ENCODE measurements at regions of chr5 and their contacts with region 1.

Region 1: DNA sequence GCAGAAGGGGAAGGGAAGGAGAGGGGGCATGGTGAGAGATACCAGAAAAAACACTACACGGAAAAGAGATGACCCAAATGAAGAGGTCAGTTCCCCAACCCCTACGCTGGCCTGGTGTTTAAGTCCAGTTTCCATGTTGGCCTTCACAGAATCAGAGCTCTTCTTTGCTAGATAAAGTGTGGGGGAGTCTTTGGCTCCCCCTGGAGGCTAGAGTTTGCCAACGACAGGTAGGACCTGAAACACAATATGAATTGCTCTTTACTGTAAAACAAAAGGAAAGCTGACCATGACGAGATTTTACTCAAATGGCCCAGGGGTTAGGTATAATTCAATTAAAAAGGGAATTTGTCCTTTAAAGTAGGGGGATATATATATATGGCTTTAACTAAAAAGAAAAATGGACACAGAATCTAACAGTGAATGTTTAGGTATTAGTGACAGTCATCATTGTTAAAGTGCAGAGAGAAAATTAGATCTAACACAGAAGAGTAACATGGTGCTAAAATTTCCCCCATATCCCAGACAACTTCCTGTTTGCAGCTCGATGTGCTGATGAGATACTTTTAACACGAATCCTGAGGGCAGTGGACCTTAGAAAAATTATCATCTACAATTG is 92.0 kb downstream of the SV2C start:
- DNase-seq: peak; percentile 70
- H3K4me3 Mint-ChIP-seq: no peak overlapping the region
- H3K27ac Mint-ChIP-seq: no peak overlapping the region
- H3K4me1 Mint-ChIP-seq: peaks cover 34% of the 10 kb centered on the region
- H3K27me3 Mint-ChIP-seq: no peaks in the 10 kb centered on the region

Region 2: GRCh38 chr5:76074487-76075065 is 100.6 kb before region 1 on chr5:
- CTCF ChIA-PET with region 1: interaction called, 27 read pairs
- POLR2A ChIA-PET with region 1: no interaction called
- intact Hi-C with region 1: loop called (anchors 1 kb)
- DNase-seq: peak; percentile 54
- H3K4me3 Mint-ChIP-seq: no peak overlapping the region
- H3K27ac Mint-ChIP-seq: no peak overlapping the region
- H3K4me1 Mint-ChIP-seq: no peaks in the 10 kb centered on the region
- H3K27me3 Mint-ChIP-seq: peaks cover 46% of the 10 kb centered on the region

Region 3: DNA sequence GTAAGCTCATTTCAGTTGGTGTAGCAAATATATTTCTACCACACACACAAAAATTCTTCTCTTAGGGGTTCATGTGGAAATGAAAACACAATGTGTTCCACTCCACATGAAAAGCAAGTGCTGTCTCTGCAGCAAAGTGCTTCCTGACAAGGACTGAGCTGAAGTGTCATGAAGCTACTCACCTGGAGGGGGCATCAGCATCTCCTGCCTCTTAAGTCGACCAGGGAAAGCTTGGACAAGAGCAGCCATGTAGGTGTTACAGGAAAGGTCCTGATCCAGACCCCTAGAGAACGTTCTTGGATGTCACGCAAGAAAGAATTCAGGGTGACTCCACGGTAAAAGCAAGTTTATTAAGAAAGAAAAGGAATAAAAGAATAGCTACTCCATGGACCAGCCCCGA is 29.2 kb before region 1 on chr5:
- CTCF ChIA-PET with region 1: interaction called, 32 read pairs
- POLR2A ChIA-PET with region 1: no interaction called
- intact Hi-C with region 1: no loop called
- DNase-seq: peak; percentile 27
- H3K4me3 Mint-ChIP-seq: no peak overlapping the region
- H3K27ac Mint-ChIP-seq: no peak overlapping the region
- H3K4me1 Mint-ChIP-seq: no peaks in the 10 kb centered on the region
- H3K27me3 Mint-ChIP-seq: peaks cover 2% of the 10 kb centered on the region

Region 4: GRCh38 chr5:76154009-76154690 is 21.0 kb before region 1 on chr5:
- CTCF ChIA-PET with region 1: interaction called, 18 read pairs
- POLR2A ChIA-PET with region 1: no interaction called
- intact Hi-C with region 1: no loop called
- DNase-seq: no peak
- H3K4me3 Mint-ChIP-seq: no peak overlapping the region
- H3K27ac Mint-ChIP-seq: no peak overlapping the region
- H3K4me1 Mint-ChIP-seq: no peaks in the 10 kb centered on the region
- H3K27me3 Mint-ChIP-seq: peaks cover 12% of the 10 kb centered on the region

Region 5: DNA sequence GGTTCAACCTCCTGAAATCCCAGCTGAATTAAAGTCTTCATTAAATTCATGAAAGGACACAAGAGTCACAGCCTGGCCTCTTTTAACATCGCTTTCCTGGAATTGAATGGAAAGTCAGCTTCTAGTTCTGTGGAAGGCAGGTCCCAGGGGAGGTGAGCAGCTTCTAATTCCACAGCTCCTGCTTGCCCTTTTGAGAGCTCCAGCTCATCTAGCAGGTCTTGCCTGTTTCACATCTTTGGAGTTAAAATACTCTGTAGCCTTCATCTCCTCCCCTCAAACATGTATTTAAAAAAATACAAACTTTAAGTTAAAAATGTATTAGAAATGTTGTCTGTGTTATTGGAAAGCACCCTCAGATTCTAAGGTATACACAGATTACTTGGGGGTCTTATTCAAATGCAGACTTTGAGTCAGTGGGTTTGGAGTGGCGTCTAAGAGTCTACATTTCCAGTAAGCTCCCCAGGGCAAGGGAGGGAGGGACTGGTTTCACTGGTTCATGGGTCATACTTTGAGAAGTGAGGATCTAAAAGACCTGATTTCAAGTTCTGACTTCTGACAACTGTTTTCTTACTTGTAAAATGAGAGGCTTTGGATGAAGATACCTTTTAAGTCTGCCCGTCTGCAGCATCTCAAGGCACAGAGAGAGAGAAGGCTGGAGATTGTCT is 16.8 kb after region 1 on chr5:
- CTCF ChIA-PET with region 1: interaction called, 28 read pairs
- POLR2A ChIA-PET with region 1: no interaction called
- intact Hi-C with region 1: no loop called
- DNase-seq: no peak
- H3K4me3 Mint-ChIP-seq: no peak overlapping the region
- H3K27ac Mint-ChIP-seq: no peak overlapping the region
- H3K4me1 Mint-ChIP-seq: no peaks in the 10 kb centered on the region
- H3K27me3 Mint-ChIP-seq: no peaks in the 10 kb centered on the region

Region 6: DNA sequence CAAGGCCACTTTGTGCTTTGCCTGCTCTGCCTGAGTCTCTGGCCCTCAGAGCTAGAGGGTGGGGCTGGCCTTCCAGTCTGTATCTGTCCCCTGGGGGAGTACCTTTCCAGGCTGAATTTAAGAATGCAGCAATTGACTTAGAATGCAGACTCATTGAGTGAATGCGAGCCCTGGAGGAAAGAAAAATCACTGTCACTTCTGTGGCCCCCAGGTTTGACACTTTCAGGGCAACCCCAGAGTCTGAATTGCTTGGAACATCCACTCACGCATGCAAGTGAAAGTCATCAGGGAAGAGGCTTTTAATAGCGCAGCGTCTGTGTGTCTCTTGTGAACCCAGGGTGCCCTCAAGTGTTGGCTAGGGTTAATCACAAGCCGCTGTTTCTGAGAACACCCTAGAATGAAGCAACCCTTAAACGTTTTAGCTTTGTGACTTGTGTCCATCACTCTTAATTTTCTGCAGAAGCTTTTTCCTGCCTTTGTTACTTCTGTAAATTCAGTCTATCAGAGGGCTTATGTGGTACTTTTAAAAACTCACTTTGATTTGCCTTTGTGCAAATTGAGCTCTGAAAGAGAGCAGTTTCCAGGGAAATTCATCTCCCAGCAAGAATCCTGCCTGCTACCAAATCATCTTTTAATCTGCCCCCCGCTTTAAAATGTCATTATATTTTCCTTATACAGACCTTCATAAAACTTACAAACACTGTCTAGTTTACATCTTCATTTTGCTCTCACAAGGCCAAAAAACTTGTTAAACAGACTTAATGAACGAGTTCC is 81.1 kb after region 1 on chr5:
- CTCF ChIA-PET with region 1: interaction called, 5 read pairs
- POLR2A ChIA-PET with region 1: no interaction called
- intact Hi-C with region 1: loop called (anchors 2 kb)
- DNase-seq: peak; percentile 78
- H3K4me3 Mint-ChIP-seq: no peak overlapping the region
- H3K27ac Mint-ChIP-seq: no peak overlapping the region
- H3K4me1 Mint-ChIP-seq: peaks cover 6% of the 10 kb centered on the region
- H3K27me3 Mint-ChIP-seq: peaks cover 11% of the 10 kb centered on the region